Activated CD4-positive, alpha-beta T cell treated with anti-CD3 and anti-CD28 coated beads for 36 hours (primary cell): ENCODE measurements at regions of chr18 and their contacts with region 1.

Region 1: DNA sequence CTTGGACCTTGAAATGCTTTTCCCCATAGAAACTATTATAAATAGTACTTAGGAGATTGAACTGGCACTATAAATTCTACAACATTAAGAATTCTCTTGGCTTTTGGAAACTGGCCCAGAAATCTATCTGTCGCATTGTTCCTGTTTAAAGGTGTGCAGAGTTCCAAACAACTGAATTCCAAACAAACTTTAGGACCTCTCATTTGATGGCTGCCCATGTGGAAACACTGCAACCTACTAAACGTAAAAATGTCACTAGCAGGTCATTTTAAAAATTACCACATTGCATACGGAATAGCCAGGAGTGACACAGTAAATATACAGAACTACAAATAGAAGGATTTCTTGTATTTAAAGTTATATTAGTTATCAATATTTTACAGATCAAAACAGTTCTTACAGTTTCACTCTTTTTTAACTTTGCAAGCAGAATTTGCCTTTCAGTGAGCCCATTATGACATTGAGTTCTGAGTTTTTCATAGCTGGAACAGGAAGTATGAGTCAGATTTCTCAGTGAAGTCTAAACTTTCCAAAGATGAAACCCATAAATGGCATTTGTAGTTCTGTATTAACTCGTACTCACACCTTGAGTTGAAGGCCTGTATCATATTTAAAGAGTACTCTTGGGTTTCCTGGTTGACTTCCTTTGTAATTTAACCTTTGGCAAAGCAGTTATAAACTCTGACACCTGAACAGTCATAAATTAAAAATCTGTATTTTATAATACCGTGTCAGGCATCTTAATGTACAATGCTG is 142.3 kb upstream of the BOD1L2 start:
- DNase-seq: no peak
- ATAC-seq: peak; percentile 96
- H3K4me3 Mint-ChIP-seq: no peak overlapping the region
- H3K27ac Mint-ChIP-seq: peak overlapping the region; percentile 77
- H3K4me1 Mint-ChIP-seq: peaks cover 34% of the 10 kb centered on the region
- H3K27me3 Mint-ChIP-seq: no peaks in the 10 kb centered on the region

Region 2: DNA sequence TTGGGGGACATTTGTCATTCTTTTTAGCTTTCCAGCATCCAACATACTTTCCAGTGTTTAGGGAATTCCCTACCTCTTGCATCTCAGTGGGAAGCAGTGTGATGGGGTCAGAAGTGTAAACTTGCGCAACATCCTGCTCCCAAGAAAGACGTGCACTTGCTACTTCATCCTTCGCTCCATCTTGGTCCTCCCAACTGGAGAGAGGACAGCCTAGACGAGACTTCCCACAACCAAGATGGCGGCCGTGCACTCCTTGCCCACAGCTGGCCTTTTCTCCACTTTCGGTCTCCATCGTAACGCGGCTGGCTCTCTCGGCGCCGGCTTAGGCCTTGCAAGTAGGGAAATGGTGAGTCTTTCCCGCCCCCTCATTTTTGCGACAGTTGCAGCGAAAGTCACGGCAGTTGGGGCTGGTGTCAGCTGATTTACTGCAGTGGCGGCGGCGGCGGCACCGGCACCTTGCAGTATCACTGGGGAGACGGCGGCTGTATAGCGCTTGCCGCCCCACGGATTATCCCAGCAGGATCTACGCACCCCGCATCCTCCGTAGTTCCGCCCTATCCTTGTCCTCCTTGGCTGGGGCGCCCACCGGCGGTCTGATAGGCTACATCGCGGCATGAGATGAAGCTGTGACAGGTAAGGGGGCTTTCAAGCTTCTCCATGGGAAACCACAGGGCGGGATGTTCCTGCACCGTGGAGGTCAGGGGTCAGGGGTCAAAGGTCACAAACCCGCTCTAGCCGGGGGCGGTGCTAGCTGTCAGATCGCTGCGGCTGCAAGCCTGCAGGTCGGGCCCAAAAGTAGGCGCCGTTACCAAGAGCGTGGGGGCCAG is 353.4 kb before region 1 on chr18 and contains the start of gene WDR7:
- CTCF ChIA-PET with region 1: no interaction called
- POLR2A ChIA-PET with region 1: no interaction called
- intact Hi-C with region 1: loop called in 1 of 2 experiments (anchors 10 kb)
- DNase-seq: peak; percentile 98
- ATAC-seq: peak; percentile 93
- H3K4me3 Mint-ChIP-seq: peak within 1 kb of the TSS; percentile 89
- H3K27ac Mint-ChIP-seq: peak within 1 kb of the TSS; percentile 90
- H3K4me1 Mint-ChIP-seq: peaks cover 42% of the 10 kb centered on the region
- H3K27me3 Mint-ChIP-seq: no peaks in the 10 kb centered on the region
- total RNA-seq, gene WDR7: 21.5 to 23.1 TPM

Region 3: GRCh38 chr18:57015451-57015850 is 10.9 kb after region 1 on chr18:
- CTCF ChIA-PET with region 1: interaction called, 3 read pairs
- POLR2A ChIA-PET with region 1: no interaction called
- intact Hi-C with region 1: loop called in 1 of 2 experiments (anchors 1 kb)
- DNase-seq: no peak
- ATAC-seq: no peak
- H3K4me3 Mint-ChIP-seq: no peak overlapping the region
- H3K27ac Mint-ChIP-seq: no peak overlapping the region
- H3K4me1 Mint-ChIP-seq: peaks cover 30% of the 10 kb centered on the region
- H3K27me3 Mint-ChIP-seq: no peaks in the 10 kb centered on the region

Region 4: GRCh38 chr18:57331718-57332117 is 327.2 kb after region 1 on chr18:
- CTCF ChIA-PET with region 1: no interaction called
- POLR2A ChIA-PET with region 1: no interaction called
- intact Hi-C with region 1: no loop called
- DNase-seq: no peak
- ATAC-seq: no peak
- H3K4me3 Mint-ChIP-seq: no peak overlapping the region
- H3K27ac Mint-ChIP-seq: no peak overlapping the region
- H3K4me1 Mint-ChIP-seq: no peaks in the 10 kb centered on the region
- H3K27me3 Mint-ChIP-seq: peaks cover 3% of the 10 kb centered on the region